Tibial artery (tissue), 4 donors: ENCODE measurements at regions of chr20 and their contacts with region 1.

Region 1: DNA sequence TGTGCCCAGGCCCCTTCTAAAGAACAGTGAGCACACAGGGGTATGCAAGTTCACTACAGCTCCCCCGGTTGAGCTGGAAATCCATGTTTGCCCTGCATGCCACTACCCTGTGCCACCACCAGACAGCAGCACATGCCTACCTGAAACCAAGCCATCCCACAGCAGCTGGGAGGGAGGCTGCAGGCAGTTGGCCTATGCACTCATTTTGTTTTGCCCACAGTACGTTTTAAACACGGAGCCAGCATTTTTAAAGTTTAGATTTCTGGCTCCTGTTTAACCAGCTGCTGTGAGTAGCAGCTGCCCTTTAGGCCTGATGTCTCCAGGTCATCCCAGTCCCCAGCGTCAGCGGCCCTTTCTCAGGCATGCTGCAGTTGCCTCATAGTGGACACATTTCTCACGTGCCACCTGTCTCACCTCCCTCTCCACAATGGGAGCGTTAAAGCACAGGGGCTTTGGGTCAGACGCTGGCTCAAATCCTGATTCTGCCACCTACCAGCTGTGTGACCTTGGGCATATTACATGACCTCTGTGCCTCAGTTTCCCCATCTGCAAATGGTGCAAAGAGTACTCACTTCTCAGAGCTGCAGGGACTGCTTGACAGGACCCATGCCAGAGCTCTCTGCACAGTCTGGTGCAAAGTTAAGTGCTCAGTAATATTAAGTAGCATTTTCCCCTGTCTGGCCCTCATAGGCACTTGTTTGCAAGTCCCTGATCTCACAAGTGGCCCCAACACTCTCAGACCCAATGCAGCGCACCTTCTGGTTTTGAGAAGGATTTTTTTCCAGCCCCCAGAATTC is 8.1 kb upstream of the UBE2V1 start:
- DNase-seq: peak; percentile 58 to 78
- H3K4me3 ChIP-seq: no peak overlapping the region
- H3K27ac ChIP-seq: peak overlapping the region in 1 of 2 donors; percentile 28
- H3K4me1 ChIP-seq: peaks cover 0 to 10% (median 3%) of the 10 kb centered on the region in 4 donors
- H3K27me3 ChIP-seq: no peaks in the 10 kb centered on the region
- CTCF ChIP-seq: peak; percentile 85 to 89

Region 2: DNA sequence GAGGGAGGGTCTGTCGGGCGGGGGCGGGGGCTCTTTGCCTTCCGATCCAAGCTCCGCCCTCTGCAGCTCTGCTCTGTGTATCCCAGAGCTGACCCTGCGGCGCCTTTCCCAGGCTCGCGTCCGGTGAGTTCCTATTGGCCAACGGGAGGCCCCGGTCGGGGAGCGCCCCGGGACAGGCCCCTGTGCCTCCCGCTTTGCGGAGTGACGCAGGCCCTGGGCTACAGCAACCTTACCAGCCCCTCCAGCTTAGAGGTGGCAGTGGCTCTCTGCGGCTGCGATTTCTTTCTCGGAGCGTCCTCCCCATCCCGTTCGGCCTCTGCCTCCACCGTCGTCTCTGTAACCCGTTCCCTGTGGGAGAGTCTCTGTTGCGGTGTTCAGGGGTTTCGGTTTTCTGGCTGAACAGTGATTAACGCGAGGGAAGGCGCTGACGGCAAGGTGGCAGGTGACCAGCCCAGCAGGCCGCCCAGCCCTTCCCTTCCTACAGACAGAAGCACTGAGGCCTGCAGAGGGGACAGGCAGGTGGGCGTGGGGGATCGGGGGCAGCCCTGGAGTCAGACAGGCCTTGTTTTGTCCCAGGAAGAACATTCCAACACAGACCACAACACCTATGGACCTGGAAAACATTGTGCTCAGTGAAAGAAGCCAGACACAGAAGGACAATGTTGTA is 51.4 kb after region 1 on chr20:
- intact Hi-C with region 1: loop called (anchors 1 kb)
- DNase-seq: peak; percentile 88 to 95
- H3K4me3 ChIP-seq: peak overlapping the region; percentile 57 to 61
- H3K27ac ChIP-seq: peak overlapping the region; percentile 82 to 87
- H3K4me1 ChIP-seq: peaks cover 0 to 28% (median 10%) of the 10 kb centered on the region in 4 donors
- H3K27me3 ChIP-seq: no peaks in the 10 kb centered on the region
- CTCF ChIP-seq: no peak

Region 3: DNA sequence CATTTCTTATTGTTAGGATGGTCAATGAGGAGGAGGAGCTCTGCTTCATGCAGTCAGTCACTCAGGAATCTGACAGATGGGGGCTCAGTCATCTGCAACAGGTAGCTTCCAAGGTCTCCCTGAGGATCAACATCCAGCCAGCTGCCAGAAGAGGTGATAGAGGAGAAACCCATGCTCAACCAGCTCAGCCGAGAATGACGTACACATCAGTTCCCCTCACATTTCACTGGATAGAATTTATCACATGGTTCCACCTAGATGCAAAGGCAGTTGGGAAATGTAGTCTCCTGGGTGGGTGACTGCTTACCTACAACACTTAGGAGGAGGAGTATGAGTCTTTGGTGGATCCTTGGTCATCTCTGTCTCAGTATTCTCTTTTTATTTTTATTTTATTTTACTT is 214.0 kb after region 1 on chr20:
- intact Hi-C with region 1: no loop called
- DNase-seq: no peak
- H3K4me3 ChIP-seq: no peak overlapping the region
- H3K27ac ChIP-seq: no peak overlapping the region
- H3K4me1 ChIP-seq: peaks cover 0 to 32% (median 7%) of the 10 kb centered on the region in 4 donors
- H3K27me3 ChIP-seq: no peaks in the 10 kb centered on the region
- CTCF ChIP-seq: no peak

Region 4: DNA sequence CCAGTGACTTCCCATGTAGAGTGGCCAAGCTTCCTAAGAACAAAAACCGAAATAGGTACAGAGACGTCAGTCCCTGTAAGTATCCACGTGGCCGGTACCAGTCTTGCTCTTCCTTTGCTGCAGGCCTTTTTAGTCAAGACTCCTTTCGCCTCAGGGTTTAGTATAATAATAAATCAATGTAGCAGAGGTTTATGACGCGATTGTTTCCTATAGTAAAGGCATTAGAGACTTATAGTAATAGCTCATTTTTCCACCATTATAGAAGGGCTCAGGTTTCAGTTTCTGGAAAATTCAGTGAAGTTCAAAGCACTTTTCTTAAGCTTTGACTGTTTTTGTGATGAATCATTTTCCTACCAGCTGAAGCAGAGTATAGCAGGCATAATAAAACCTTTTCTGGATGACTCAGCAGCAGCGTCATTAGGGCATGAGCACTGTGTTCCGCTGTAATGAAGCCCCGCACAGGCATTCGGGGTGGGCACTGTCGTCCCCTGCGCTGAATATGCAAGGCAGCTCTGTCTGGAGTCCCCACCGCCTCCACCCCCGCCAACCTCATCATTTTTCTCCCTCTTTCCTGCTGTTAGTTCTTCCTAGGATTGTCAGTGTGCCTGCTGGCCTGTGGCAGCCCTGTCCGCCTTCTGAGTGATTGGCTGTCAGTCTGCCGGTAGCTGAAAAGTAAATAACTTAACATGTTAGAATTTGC is 440.4 kb after region 1 on chr20:
- intact Hi-C with region 1: no loop called
- DNase-seq: peak in 1 of 2 donors; percentile 73
- H3K4me3 ChIP-seq: no peak overlapping the region
- H3K27ac ChIP-seq: peak overlapping the region; percentile 54 to 70
- H3K4me1 ChIP-seq: peaks cover 0 to 31% (median 14%) of the 10 kb centered on the region in 4 donors
- H3K27me3 ChIP-seq: no peaks in the 10 kb centered on the region
- CTCF ChIP-seq: no peak